WTC11 (cell line): ENCODE measurements at regions of chr11 and their contacts with region 1.

Region 1: DNA sequence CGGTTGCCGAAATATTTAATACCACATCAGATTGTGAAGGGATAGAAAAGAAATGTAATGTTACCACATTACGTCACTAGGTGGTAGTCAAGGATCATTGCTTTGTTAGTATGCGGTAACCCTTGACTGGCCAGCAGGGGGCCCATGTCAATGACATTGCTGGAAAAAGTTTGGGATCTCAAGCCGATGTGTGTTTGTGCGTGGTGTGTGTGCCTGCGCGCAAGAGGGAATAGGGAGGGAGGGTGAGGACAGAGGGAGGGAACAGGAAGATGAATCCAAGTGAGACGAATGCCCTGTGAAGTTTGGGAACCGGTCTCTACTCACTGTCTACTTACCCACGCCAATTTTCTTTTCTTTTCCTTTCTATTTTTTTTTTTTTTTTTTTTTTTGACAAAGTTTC is 10.7 kb upstream of the MRGPRX2 start:
- DNase-seq: peak; percentile 80
- ATAC-seq: peak; percentile 66
- H3K4me3 Mint-ChIP-seq: no peak overlapping the region
- H3K27ac Mint-ChIP-seq: no peak overlapping the region
- H3K4me1 Mint-ChIP-seq: peaks cover 22% of the 10 kb centered on the region
- H3K27me3 Mint-ChIP-seq: peaks cover 5% of the 10 kb centered on the region
- CTCF ChIP-seq: peak; percentile 83

Region 2: GRCh38 chr11:19116971-19117750 is 45.9 kb after region 1 on chr11 and contains the start of gene ZDHHC13:
- CTCF ChIA-PET with region 1: interaction called, 21 read pairs
- POLR2A ChIA-PET with region 1: no interaction called
- DNase-seq: peak; percentile 98
- ATAC-seq: peak; percentile 96
- H3K4me3 Mint-ChIP-seq: peak within 1 kb of the TSS; percentile 84
- H3K27ac Mint-ChIP-seq: peak within 1 kb of the TSS; percentile 63; the same call in 1 of the 2 replicates
- H3K4me1 Mint-ChIP-seq: peaks cover 36% of the 10 kb centered on the region
- H3K27me3 Mint-ChIP-seq: peaks cover 3% of the 10 kb centered on the region; the same call in 1 of the 2 replicates
- CTCF ChIP-seq: no peak
- total RNA-seq, gene ZDHHC13: 19.4 to 23.6 TPM (median 20.9 TPM) in 3 replicates

Region 3: DNA sequence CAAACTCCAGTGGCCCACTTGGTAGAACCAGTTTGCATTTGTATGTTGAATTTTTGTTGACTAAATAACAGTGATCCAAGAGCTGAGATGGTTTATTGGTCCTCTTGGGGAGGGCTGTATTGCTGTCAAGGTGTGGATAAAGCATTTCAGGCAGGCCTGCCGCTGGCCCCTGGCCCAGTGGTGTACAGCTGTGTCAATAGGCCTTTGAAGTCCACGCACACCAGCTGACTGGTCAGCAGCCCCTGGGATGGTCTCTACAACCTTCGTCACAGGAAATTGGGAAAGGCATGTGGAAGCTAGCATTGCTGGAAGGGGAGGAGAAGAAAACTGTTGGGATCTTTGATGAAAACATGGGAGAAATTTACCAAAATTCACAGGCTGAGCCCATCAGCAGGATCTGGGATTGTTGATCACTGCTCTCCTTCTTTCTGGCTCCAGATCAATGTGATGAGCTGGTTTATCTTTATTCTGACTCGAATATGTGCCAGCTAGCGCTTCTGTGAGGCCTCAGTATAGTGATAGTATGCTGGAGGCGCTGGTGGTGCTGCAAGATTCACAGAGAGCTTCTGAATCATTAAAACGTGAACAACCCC is 182.0 kb after region 1 on chr11:
- CTCF ChIA-PET with region 1: interaction called, 11 read pairs
- POLR2A ChIA-PET with region 1: no interaction called
- DNase-seq: no peak
- ATAC-seq: no peak
- H3K4me3 Mint-ChIP-seq: no peak overlapping the region
- H3K27ac Mint-ChIP-seq: no peak overlapping the region
- H3K4me1 Mint-ChIP-seq: no peaks in the 10 kb centered on the region
- H3K27me3 Mint-ChIP-seq: peaks cover 12% of the 10 kb centered on the region
- CTCF ChIP-seq: no peak

Region 4: DNA sequence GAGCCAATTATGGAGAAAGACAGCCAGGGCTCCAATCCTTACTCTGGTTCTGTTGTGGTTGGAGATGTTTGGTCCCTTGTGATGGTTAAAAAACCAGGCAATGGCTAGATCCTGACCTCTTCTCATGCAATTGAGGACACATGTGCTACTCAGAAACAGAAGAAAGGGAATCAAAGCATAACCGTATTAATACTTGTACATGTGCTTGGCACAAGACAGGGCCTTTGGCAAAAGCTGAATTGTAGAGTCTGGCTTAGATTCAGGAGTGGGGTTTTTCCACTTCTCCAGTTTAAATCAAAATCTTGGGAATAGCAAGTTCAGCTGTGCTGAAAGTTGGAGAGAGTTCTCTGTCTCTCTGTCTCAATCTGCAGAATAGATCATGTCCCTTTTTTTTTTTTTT is 249.6 kb after region 1 on chr11:
- CTCF ChIA-PET with region 1: no interaction called
- POLR2A ChIA-PET with region 1: no interaction called
- DNase-seq: no peak
- ATAC-seq: no peak
- H3K4me3 Mint-ChIP-seq: no peak overlapping the region
- H3K27ac Mint-ChIP-seq: no peak overlapping the region
- H3K4me1 Mint-ChIP-seq: no peaks in the 10 kb centered on the region
- H3K27me3 Mint-ChIP-seq: no peaks in the 10 kb centered on the region; the same call in none of the 2 replicates
- CTCF ChIP-seq: no peak

Region 5: DNA sequence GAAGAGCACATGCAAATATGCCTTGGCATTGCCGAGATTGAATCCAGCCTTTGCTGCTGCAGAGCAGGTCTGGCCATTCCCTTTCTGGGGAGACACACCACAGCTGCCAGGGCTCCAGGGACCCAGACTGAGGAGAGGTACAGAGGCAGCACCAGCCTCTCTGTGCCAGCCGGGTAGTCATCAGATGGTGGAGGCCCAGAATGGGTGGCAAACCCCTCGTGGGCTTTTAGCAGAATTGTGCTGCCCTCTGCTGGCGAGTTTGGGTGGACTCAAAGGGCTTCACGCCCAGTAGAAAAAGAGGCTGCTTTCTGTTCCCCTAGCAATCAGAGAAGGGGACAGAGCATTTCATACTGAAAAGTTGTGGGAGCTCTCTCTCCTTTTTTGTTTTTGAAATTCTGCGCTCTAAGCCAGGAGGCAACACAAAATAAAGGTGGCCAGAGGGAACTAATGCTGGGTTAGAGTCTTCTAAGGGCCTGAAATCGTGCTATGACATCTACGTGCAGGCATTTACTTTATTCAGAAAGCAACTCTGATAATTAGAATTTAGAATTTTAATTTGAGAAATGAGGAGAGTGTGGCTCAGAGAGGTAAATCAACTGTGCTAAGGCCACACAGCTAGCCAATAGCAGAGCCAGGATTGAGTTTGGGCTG is 482.6 kb after region 1 on chr11:
- CTCF ChIA-PET with region 1: interaction called, 17 read pairs
- POLR2A ChIA-PET with region 1: no interaction called
- DNase-seq: peak; percentile 87
- ATAC-seq: peak; percentile 50
- H3K4me3 Mint-ChIP-seq: no peak overlapping the region
- H3K27ac Mint-ChIP-seq: no peak overlapping the region
- H3K4me1 Mint-ChIP-seq: peaks cover 24% of the 10 kb centered on the region
- H3K27me3 Mint-ChIP-seq: no peaks in the 10 kb centered on the region; the same call in 1 of the 2 replicates
- CTCF ChIP-seq: peak; percentile 86